OCI-LY7 (cell line): ENCODE measurements at regions of chrX and their contacts with region 1.

Region 1: GRCh38 chrX:71181910-71182799 is 37.5 kb downstream of the NLGN3 start:
- DNase-seq: peak; percentile 90
- H3K4me3 ChIP-seq: peak overlapping the region; percentile 66
- H3K27ac ChIP-seq: peak overlapping the region; percentile 93
- H3K4me1 ChIP-seq: peaks cover 26% of the 10 kb centered on the region
- CTCF ChIP-seq: no peak

Region 2: DNA sequence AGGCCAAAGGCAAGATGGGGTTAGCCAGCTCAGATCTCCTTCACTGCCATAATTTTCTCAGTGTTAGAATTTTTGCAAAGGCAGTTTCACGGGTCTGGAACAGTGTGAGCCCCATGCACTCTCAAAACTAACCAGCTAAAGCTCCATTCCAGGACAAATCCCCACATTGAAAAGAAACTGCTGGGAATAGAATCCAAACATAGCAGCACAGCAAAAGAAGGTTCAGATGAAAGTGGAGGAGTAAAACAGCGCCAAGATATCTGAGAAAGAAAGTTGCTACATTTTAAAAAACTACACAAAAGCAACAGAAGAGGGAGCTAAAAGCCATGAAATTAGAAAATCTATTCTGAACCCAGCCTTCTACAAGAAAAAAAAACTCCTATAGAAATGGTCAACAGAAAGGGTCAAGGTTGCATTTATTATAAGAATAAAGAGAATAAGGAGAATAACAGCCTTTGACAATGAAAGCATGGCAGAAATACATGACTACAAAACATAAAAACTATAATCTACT is 211.6 kb before region 1 on chrX:
- CTCF ChIA-PET with region 1: no interaction called
- POLR2A ChIA-PET with region 1: interaction called, 3 read pairs
- intact Hi-C with region 1: loop called (anchors 2 kb)
- DNase-seq: peak; percentile 21
- H3K4me3 ChIP-seq: no peak overlapping the region
- H3K27ac ChIP-seq: no peak overlapping the region
- H3K4me1 ChIP-seq: no peaks in the 10 kb centered on the region
- CTCF ChIP-seq: peak; percentile 67

Region 3: GRCh38 chrX:70998411-70999027 is 183.6 kb before region 1 on chrX:
- CTCF ChIA-PET with region 1: no interaction called
- POLR2A ChIA-PET with region 1: no interaction called
- intact Hi-C with region 1: loop called (anchors 10 kb)
- DNase-seq: peak; percentile 46
- H3K4me3 ChIP-seq: no peak overlapping the region
- H3K27ac ChIP-seq: no peak overlapping the region
- H3K4me1 ChIP-seq: no peaks in the 10 kb centered on the region
- CTCF ChIP-seq: peak; percentile 70

Region 4: GRCh38 chrX:71068049-71068763 is 113.9 kb before region 1 on chrX and contains the start of gene SNX12:
- CTCF ChIA-PET with region 1: no interaction called
- POLR2A ChIA-PET with region 1: no interaction called
- intact Hi-C with region 1: loop called (anchors 1 kb)
- DNase-seq: peak; percentile 93
- H3K4me3 ChIP-seq: peak within 1 kb of the TSS; percentile 96
- H3K27ac ChIP-seq: peak within 1 kb of the TSS; percentile 69
- H3K4me1 ChIP-seq: peaks cover 7% of the 10 kb centered on the region
- CTCF ChIP-seq: no peak
- total RNA-seq, gene SNX12: 21.3 and 24.8 TPM in 2 replicates

Region 5: GRCh38 chrX:71098302-71098701 is 83.9 kb before region 1 on chrX:
- CTCF ChIA-PET with region 1: interaction called, 5 read pairs
- POLR2A ChIA-PET with region 1: no interaction called
- intact Hi-C with region 1: loop called (anchors 1 kb)
- DNase-seq: peak; percentile 77
- H3K4me3 ChIP-seq: no peak overlapping the region
- H3K27ac ChIP-seq: no peak overlapping the region
- H3K4me1 ChIP-seq: peaks cover 31% of the 10 kb centered on the region
- CTCF ChIP-seq: peak; percentile 78

Region 6: GRCh38 chrX:71198066-71198465 is 15.9 kb after region 1 on chrX:
- CTCF ChIA-PET with region 1: interaction called, 4 read pairs
- POLR2A ChIA-PET with region 1: interaction called, 46 read pairs
- intact Hi-C with region 1: loop called (anchors 2 kb)
- DNase-seq: peak; percentile 72
- H3K4me3 ChIP-seq: peak overlapping the region; percentile 93
- H3K27ac ChIP-seq: peak overlapping the region; percentile 80
- H3K4me1 ChIP-seq: peaks cover 24% of the 10 kb centered on the region
- CTCF ChIP-seq: no peak

Region 7: DNA sequence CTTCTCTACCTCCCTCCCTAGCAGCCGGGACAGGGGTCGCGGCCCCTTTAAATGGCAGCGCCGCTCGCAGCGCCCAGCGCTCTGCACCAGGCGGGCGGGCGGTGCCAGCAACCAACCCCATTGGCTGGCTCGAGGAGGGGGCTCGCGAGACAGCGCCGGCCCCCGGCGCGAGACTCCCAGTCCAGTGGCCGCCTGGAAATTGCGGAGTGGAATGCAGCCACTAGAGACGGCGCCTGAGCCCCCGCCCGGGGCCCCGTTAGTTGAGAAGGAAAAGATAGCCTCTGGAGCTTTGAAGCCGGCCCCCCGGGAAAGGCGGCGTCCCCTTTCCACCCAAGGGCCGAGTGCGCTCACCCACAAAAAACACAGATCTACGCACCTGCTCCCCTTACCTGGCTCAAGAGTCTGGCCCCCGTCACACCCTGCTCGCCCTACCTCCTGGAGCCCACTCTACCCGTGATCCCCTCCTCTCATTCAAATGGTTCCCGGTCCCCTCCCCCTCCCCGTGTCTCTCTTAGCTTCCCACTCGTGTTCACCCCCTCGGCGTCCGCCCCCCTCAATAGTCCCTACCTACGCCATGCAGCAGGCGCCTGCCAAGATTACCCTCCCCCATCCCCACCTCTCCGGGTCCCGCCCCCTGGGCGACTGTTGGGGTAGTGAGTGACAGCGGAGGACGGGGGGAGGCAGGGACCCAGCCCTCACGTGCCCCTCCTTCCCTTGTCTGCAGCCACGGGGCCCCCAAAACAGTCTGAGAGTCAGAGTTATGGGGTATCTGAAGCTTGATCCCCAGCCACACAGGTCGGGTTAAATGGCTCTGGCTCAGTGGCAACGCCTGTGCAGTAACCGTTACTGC is 72.2 kb after region 1 on chrX and contains the start of gene ZMYM3:
- CTCF ChIA-PET with region 1: no interaction called
- POLR2A ChIA-PET with region 1: interaction called, 22 read pairs
- intact Hi-C with region 1: no loop called
- DNase-seq: peak; percentile 90
- H3K4me3 ChIP-seq: peak within 1 kb of the TSS; percentile 96
- H3K27ac ChIP-seq: peak within 1 kb of the TSS; percentile 85
- H3K4me1 ChIP-seq: peaks cover 24% of the 10 kb centered on the region
- CTCF ChIP-seq: no peak
- total RNA-seq, gene ZMYM3: 21.8 and 23.8 TPM in 2 replicates